ENCODE measurements at regions of chr14 and their contacts with region 1.

Region 1: GRCh38 chr14:39426605-39427004 is 5.6 kb downstream of the FBXO33 start:
- DNase-seq: peak; percentile 60
- ATAC-seq: peak; percentile 58
- H3K4me3 ChIP-seq: no peak overlapping the region; the same call in 1 of the 2 replicates
- H3K27ac ChIP-seq: no peak overlapping the region
- H3K4me1 ChIP-seq: peaks cover 24% of the 10 kb centered on the region
- H3K27me3 ChIP-seq: no peaks in the 10 kb centered on the region
- CTCF ChIP-seq: peak; percentile 65

Region 2: GRCh38 chr14:39114073-39114838 is 312.3 kb before region 1 on chr14 and contains the start of gene GEMIN2:
- CTCF ChIA-PET with region 1: no interaction called
- POLR2A ChIA-PET with region 1: no interaction called
- intact Hi-C with region 1: loop called (anchors 2 kb)
- DNase-seq: peak; percentile 97
- ATAC-seq: peak; percentile 98
- H3K4me3 ChIP-seq: peak within 1 kb of the TSS; percentile 90
- H3K27ac ChIP-seq: peak within 1 kb of the TSS; percentile 56
- H3K4me1 ChIP-seq: peaks cover 15% of the 10 kb centered on the region
- H3K27me3 ChIP-seq: no peaks in the 10 kb centered on the region
- CTCF ChIP-seq: no peak
- total RNA-seq, gene GEMIN2: 42.7 and 48.1 TPM in 2 replicates

Region 3: DNA sequence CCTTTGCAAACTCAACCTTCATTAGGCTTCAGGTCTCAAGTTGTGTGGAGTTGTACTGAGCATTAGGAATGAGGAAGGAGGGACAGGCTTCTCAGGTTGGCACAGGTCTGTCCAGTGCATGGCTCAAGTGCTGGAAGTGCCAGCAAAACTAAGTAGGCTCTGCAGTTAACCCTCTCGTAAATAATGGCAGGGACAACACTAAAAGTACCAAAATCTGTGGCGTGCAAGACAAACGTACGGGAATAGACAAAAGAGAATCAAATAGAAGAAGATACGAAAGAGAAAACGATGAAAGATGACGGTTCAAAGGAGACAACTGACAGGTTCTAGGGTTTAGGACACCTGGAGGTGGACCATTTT is 257.1 kb before region 1 on chr14:
- CTCF ChIA-PET with region 1: no interaction called
- POLR2A ChIA-PET with region 1: no interaction called
- intact Hi-C with region 1: loop called (anchors 5 kb)
- DNase-seq: no peak
- ATAC-seq: peak; percentile 47
- H3K4me3 ChIP-seq: peak overlapping the region; percentile 84
- H3K27ac ChIP-seq: peak overlapping the region; percentile 82
- H3K4me1 ChIP-seq: peaks cover 20% of the 10 kb centered on the region
- H3K27me3 ChIP-seq: no peaks in the 10 kb centered on the region
- CTCF ChIP-seq: no peak

Region 4: GRCh38 chr14:39232554-39233415 is 193.8 kb before region 1 on chr14:
- CTCF ChIA-PET with region 1: interaction called, 6 read pairs
- POLR2A ChIA-PET with region 1: no interaction called
- intact Hi-C with region 1: loop called (anchors 2 kb)
- DNase-seq: no peak
- ATAC-seq: peak; percentile 31; the same call in 1 of the 2 replicates
- H3K4me3 ChIP-seq: no peak overlapping the region
- H3K27ac ChIP-seq: no peak overlapping the region
- H3K4me1 ChIP-seq: no peaks in the 10 kb centered on the region
- H3K27me3 ChIP-seq: no peaks in the 10 kb centered on the region
- CTCF ChIP-seq: no peak

Region 5: DNA sequence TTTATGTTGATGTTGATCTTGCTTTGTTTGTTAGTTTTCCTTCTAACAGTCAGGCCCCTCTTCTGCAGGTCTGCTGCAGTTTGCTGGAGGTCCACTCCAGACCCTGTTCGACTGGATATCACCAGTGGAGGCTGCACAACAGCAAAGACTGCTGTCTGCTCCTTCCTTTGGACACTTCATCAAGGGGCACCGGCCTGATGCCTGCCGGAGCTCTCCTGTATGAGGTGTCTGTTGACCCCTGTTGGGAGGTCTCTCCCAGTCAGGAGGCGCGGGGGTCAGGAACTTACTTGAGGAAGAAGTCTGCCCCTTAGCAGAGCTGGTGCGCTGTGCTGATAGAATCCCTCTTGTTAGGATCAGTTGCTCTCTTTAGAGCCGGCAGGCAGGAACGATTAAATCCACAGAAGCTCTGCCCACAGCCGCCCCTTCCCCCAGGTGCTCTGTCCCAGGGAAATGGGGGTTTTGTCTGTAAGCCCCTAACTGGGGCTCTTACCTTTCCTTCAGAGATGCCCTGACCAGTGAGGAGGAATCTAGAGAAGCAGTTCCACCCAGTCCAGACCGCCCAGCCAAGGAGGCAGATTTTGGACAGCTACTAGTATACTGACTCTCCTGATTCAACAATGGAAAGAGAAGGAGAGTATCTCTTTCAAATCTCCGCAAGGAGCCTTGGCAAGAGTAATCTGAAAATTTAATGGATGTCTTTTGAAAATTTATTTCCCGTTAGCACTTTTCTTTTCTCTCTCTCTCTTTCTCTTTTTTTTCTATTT is 167.6 kb before region 1 on chr14:
- CTCF ChIA-PET with region 1: interaction called, 10 read pairs
- POLR2A ChIA-PET with region 1: no interaction called
- intact Hi-C with region 1: no loop called
- DNase-seq: no peak
- ATAC-seq: no peak
- H3K4me3 ChIP-seq: no peak overlapping the region
- H3K27ac ChIP-seq: no peak overlapping the region
- H3K4me1 ChIP-seq: no peaks in the 10 kb centered on the region
- H3K27me3 ChIP-seq: no peaks in the 10 kb centered on the region
- CTCF ChIP-seq: no peak

Region 6: DNA sequence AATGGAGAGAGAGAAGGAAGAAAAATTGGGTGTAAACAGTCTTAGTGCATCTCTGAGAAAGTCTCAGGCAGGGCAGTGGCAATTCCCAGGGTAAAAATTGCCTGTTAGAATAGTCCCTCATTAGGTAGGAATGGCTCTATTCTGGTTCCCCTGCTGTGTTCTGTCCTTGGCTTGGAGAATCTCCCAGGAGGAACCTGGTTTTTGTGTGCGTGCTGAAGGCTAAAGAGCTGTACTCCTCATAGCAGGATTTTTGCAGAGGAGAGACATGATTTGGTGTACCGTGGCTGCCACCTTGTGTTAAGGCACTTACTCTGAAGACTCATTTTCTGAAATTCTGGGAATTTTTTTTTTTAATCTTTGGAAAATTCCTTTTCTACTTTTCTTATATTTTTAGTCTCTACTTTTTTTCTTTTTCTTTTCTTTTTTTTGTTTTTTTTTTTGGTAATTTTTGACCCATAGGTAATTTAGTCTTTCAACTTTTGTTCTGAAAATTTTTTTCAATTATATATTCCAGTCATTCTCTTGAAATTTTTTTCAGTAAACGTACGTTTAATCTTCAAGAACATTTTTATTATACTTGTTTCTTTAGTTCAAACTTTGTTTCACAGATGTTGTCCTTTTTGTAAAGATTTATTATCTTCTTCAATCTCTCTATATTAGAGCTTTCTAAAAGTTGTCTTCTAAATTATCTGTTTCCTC is 58.2 kb before region 1 on chr14:
- CTCF ChIA-PET with region 1: no interaction called
- POLR2A ChIA-PET with region 1: no interaction called
- intact Hi-C with region 1: loop called (anchors 1 kb)
- DNase-seq: peak; percentile 78
- ATAC-seq: peak; percentile 76
- H3K4me3 ChIP-seq: no peak overlapping the region
- H3K27ac ChIP-seq: no peak overlapping the region
- H3K4me1 ChIP-seq: no peaks in the 10 kb centered on the region
- H3K27me3 ChIP-seq: no peaks in the 10 kb centered on the region
- CTCF ChIP-seq: peak; percentile 81

Measured in PC-3 (cell line).